Left cardiac atrium (tissue), 4 donors: ENCODE measurements at regions of chr3 and their contacts with region 1.

Region 1: DNA sequence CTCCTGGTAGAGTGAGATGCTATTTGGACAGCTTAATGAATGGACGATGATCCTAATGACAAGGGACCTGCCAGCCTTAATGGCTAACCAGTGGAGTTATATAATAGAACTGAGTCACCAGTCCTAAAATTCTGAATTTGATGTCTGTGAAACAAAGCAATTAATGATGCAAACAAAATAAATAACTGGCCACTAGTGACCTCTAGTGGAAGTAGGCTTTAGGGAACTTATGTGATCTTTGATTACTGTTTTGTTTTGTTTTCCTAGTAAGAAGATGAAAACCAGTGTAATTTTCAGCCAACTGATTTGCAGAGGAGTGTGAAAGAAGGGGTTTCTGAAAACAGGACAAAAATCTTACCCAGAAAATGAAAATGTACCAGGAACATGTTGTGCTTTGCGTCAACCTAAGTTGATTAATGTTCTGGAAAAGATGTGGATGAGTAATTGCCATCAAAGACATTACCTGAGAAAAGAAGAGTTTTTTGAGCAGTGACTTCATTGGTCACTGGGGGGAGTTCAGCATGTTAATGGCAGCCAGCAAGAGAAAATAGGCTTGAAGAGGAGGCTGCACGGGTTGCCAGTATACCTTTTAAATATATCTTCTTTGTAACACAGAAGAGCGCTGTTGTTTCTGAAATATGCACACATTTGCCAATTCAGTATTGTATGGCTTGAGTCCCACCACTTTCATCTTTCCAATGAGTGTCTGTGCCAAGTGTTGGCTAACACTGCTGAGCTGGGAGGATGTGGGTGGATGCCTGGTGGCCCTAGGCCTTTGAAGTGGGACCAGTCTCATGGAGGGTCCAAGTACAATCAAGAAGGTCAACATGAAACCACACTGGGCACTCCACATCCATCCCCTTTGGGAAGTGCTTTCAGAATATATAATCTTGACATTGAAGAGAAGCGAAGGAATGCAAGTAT is 9.3 kb downstream of the VEPH1 start:
- DNase-seq: no peak
- ATAC-seq: peak; percentile 18 to 47

Region 2: DNA sequence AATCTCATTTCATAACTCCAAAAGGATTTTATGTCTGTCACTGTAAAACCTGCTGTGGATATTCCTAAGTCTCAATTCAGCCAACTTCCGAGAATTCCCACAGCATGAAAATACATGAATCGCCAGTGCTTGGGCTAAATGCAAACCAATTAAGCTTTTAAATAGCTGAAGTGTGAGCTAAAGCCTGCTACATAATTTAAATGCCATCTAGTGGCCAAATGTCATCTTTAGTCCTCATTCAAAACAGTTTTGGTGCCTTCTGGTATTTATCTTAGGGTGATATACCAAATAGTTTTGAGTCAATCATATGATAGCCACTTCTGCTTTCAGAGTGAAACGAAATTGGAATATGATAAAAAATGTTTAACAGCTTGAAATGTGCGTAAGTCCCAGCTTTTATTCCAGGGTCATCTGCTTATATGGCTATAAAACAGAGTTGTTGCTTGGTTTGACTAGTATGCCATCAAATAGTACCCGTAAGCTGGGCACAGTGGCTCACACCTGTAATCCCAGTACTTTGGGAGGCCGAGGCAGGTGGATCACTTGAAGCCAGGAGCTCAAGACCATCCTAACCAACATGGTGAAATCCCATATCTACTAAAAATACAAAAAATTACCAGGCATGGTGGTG is 292.1 kb before region 1 on chr3:
- intact Hi-C with region 1: loop called (anchors 2 kb)
- DNase-seq: no peak
- ATAC-seq: peak; percentile 57 to 63